Mammary epithelial cell (primary cell): ENCODE measurements at regions of chr16 and their contacts with region 1.

Region 1: DNA sequence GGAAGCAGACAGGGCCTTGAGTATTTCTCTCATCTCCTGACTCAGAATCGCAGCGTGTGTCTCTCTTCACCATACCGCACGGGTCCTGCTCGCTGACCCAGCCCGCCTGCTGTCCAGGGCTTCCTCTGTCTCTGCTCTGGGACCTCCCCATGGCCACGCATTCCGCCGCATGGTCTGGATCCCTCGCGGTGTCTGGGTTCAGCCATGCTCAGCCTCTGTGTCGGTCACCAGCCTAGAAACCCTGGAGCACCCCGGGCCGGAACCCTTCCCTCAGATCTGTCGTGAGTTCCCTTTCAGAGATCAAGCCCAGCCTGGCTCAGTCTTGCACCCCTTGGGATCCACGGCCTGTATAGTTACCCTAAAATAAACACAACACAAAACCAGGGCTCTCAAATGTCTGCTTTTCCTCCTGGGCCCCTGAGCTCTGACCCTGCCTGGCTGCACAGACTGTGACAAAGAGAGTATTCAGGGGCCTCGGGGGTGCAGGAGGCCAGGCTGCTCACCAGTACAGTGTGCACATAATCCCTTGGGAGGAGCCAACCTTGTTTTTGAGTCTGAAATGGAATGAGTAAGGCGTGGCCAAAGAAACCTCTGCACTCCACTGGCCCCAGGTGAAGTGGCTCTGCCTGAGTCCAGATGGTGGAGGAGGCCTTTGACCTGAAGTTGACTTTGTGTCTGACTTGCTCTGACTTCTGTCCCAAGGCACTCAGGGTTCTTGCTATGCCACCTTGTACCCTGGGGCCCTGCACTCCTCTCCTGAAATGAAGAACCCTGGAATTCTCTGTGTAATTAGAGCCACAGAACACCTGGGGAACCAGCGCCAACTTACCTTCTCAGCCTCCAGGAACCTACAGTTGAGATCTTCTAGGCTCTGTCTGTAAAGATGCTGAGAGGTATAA is 5.8 kb upstream of the SPIRE2 start:
- DNase-seq: no peak
- H3K4me3 ChIP-seq: no peak overlapping the region
- H3K27ac ChIP-seq: no peak overlapping the region
- H3K4me1 ChIP-seq: peaks cover 3% of the 10 kb centered on the region
- H3K27me3 ChIP-seq: no peaks in the 10 kb centered on the region
- CTCF ChIP-seq: no peak

Region 2: DNA sequence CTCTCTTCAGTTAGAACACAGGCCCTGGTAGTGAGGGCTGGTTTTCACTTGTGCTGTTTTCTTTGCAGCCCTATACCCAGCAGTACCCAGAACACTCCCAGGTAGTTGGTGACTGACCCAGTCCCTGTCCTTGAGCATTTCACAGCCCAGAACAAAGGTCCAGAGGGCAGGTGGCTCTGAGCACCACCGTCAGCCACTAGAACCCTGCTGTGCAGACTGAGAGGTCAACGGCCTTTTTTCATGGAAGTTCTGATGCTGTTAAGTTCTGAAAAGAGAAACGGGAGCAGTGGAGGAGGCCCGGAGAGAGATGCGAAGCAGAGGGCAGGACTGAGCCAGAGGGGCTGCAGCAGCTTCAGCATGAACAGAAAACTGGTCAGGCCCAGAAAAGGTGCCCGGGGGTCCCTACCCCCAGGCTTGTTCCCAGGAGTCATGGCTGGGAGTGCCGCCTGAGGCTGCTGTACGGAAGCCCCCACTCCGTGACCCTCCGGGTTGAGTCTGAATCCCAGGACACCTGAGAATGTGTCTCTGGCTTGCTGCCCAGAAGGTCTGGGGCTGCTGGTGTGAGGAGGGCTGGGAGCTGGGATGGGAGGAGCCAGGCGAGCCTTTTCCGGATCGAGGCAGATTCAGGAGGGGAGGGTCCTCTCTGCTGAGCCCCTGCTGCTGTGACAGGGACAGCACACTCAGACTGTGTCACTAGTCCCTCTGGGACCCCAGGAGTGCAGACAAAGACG is 92.4 kb before region 1 on chr16:
- CTCF ChIA-PET with region 1: no interaction called
- dilution Hi-C with region 1: loop called (anchors 5 kb)
- in situ Hi-C with region 1: no loop called
- intact Hi-C with region 1: no loop called
- DNase-seq: no peak
- H3K4me3 ChIP-seq: no peak overlapping the region
- H3K27ac ChIP-seq: no peak overlapping the region
- H3K4me1 ChIP-seq: no peaks in the 10 kb centered on the region
- H3K27me3 ChIP-seq: no peaks in the 10 kb centered on the region
- CTCF ChIP-seq: no peak

Region 3: GRCh38 chr16:89764711-89765201 is 57.7 kb before region 1 on chr16:
- CTCF ChIA-PET with region 1: no interaction called
- dilution Hi-C with region 1: no loop called
- in situ Hi-C with region 1: no loop called
- intact Hi-C with region 1: no loop called
- DNase-seq: no peak
- H3K4me3 ChIP-seq: no peak overlapping the region
- H3K27ac ChIP-seq: no peak overlapping the region
- H3K4me1 ChIP-seq: no peaks in the 10 kb centered on the region
- H3K27me3 ChIP-seq: no peaks in the 10 kb centered on the region
- CTCF ChIP-seq: no peak